ENCODE measurements at regions of chr2 and their contacts with region 1.

Region 1: GRCh38 chr2:130342533-130343275 is at the start of gene IMP4:
- DNase-seq: peak; percentile 97
- H3K4me3 Mint-ChIP-seq: peak within 1 kb of the TSS; percentile 99
- H3K27ac Mint-ChIP-seq: peak within 1 kb of the TSS; percentile 100
- H3K4me1 Mint-ChIP-seq: peaks cover 40% of the 10 kb centered on the region
- H3K27me3 Mint-ChIP-seq: no peaks in the 10 kb centered on the region
- total RNA-seq, gene IMP4: 120 to 128 TPM

Region 2: DNA sequence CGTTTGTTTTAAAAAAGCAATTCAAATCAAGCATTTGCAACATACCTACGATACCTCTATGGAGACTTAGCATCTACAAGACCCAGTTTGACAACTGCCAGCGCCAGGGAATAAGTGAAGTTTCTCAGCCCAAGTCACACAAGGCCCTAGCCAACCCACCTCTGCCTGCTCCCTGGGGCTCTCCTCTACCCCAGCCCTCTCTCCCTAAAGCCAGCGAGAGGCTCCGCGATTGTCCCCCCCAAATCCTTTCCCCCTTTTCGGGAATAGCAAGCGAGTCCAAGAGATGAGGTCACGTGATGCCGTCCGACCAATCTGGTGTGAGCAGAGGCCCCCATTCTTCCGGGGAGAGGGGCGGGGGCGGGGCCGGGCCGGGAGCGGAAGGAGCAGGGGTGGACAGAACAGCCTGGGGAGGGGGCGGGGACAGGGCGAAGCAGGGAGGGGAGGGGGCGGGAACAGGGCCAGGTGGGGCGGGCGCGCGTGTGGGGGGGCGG is 465.4 kb before region 1 on chr2:
- CTCF ChIA-PET with region 1: no interaction called
- intact Hi-C with region 1: loop called (anchors 1 kb)
- DNase-seq: peak; percentile 91
- H3K4me3 Mint-ChIP-seq: peak overlapping the region; percentile 92
- H3K27ac Mint-ChIP-seq: peak overlapping the region; percentile 89
- H3K4me1 Mint-ChIP-seq: peaks cover 6% of the 10 kb centered on the region
- H3K27me3 Mint-ChIP-seq: no peaks in the 10 kb centered on the region

Region 3: GRCh38 chr2:129888896-129889295 is 453.8 kb before region 1 on chr2:
- CTCF ChIA-PET with region 1: no interaction called
- intact Hi-C with region 1: no loop called
- DNase-seq: no peak
- H3K4me3 Mint-ChIP-seq: no peak overlapping the region
- H3K27ac Mint-ChIP-seq: no peak overlapping the region
- H3K4me1 Mint-ChIP-seq: no peaks in the 10 kb centered on the region
- H3K27me3 Mint-ChIP-seq: peaks cover 5% of the 10 kb centered on the region

Region 4: GRCh38 chr2:130332271-130333073 is 10.2 kb before region 1 on chr2:
- CTCF ChIA-PET with region 1: interaction called, 19 read pairs
- intact Hi-C with region 1: no loop called
- DNase-seq: peak; percentile 77
- H3K4me3 Mint-ChIP-seq: no peak overlapping the region
- H3K27ac Mint-ChIP-seq: no peak overlapping the region
- H3K4me1 Mint-ChIP-seq: peaks cover 3% of the 10 kb centered on the region
- H3K27me3 Mint-ChIP-seq: peaks cover 17% of the 10 kb centered on the region

Region 5: GRCh38 chr2:130372055-130372832 is 29.5 kb after region 1 on chr2:
- CTCF ChIA-PET with region 1: interaction called, 9 read pairs
- intact Hi-C with region 1: loop called (anchors 1 kb)
- DNase-seq: peak; percentile 82
- H3K4me3 Mint-ChIP-seq: peak overlapping the region; percentile 86
- H3K27ac Mint-ChIP-seq: peak overlapping the region; percentile 93
- H3K4me1 Mint-ChIP-seq: peaks cover 46% of the 10 kb centered on the region
- H3K27me3 Mint-ChIP-seq: no peaks in the 10 kb centered on the region

Region 6: DNA sequence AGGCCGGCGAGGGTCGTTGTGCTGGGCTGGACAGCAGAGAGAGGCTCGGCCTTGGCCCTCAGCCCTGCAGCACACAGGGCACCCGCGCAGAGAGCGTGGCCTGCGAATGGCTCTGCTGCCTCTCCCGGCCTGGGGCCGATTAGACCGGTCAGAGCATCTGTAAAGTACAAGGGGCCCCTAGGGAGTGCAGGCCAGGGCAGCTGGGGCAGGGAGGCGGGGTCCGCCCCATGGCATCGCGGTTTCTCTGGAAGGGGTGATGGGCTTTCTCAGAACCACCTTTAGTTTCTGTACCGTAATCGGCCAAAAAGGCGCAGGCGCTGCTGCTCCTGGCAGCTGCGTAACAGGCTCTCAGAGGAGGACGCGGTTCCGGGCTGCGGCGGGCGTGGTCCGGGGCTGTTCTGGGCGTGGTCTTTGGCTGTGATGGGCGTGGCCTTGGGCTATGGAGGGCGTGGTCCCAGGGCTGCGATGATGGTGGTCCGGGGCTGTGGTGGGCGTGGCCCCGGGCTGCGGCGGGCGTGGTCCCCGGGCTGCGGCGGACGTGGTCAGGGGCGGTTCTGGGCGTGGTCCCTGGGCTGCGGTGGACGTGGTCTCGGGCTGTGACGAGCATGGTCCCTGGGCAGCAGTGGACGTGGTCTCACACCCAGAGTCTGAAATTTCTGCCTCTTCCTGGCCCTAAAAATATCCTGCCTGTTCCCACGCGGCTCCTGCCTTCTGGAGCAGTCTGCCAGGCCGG is 384.7 kb after region 1 on chr2:
- CTCF ChIA-PET with region 1: no interaction called
- intact Hi-C with region 1: loop called (anchors 1 kb)
- DNase-seq: peak; percentile 92
- H3K4me3 Mint-ChIP-seq: peak overlapping the region; percentile 73
- H3K27ac Mint-ChIP-seq: peak overlapping the region; percentile 43
- H3K4me1 Mint-ChIP-seq: peaks cover 7% of the 10 kb centered on the region
- H3K27me3 Mint-ChIP-seq: no peaks in the 10 kb centered on the region

Region 7: DNA sequence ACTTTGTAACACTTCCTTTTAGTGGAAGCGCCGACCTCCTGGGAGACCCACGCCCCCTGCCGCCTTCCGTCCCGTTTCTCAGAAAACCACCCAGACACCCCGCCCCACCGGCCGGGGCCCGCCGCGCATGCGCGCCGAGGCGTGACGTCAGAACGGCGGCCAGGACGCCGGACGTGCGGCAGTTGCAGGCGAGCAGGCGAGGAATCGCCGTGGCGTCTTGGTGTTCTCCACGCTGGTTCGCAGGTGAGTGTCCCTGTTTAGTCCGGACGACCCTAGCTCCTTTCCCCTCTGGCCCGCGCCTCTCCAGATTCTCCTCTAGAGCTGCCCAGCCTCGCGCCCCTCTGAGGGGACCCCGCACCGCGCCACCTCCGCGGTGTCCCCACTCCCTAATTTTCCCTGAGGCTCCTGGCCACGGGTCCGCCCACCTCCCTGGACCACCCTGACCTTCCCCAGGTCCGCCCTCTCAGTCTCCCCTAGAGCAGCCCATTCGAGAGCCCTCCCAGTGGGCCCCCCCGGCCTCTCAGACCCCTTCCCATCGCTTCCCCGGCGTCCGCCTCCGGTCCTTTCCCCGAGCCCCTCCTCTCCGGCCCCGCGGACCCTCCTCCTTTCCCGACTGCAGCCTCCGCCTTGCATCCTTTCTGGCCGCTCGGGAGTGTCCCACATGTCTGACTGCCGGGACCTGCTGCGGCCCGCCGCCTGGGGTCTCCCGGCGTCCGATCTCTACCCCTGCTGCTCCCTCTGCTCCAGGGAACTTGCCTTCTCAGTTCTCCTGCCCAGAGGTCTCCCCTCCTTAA is 762.6 kb after region 1 on chr2 and contains the start of gene PLEKHB2:
- CTCF ChIA-PET with region 1: no interaction called
- intact Hi-C with region 1: loop called (anchors 1 kb)
- DNase-seq: peak; percentile 92
- H3K4me3 Mint-ChIP-seq: peak within 1 kb of the TSS; percentile 93
- H3K27ac Mint-ChIP-seq: peak within 1 kb of the TSS; percentile 98
- H3K4me1 Mint-ChIP-seq: peaks cover 40% of the 10 kb centered on the region
- H3K27me3 Mint-ChIP-seq: no peaks in the 10 kb centered on the region
- total RNA-seq, gene PLEKHB2: 43.4 to 43.9 TPM

Measured in activated naive CD4-positive, alpha-beta T cell treated with anti-CD3 and anti-CD28 coated beads for 36 hours (primary cell).